ENCODE measurements at regions of chr12 and their contacts with region 1.

Region 1: GRCh38 chr12:54398995-54399793 is 14.7 kb upstream of the ZNF385A start:
- DNase-seq: peak; percentile 93
- ATAC-seq: peak; percentile 97
- H3K4me3 Mint-ChIP-seq: no peak overlapping the region
- H3K27ac Mint-ChIP-seq: no peak overlapping the region
- H3K4me1 Mint-ChIP-seq: peaks cover 5% of the 10 kb centered on the region
- H3K27me3 Mint-ChIP-seq: no peaks in the 10 kb centered on the region
- CTCF ChIP-seq: peak; percentile 92

Region 2: GRCh38 chr12:54337280-54337842 is 61.8 kb before region 1 on chr12:
- CTCF ChIA-PET with region 1: interaction called, 11 read pairs
- POLR2A ChIA-PET with region 1: no interaction called
- intact Hi-C with region 1: no loop called
- DNase-seq: no peak
- ATAC-seq: no peak
- H3K4me3 Mint-ChIP-seq: no peak overlapping the region
- H3K27ac Mint-ChIP-seq: no peak overlapping the region
- H3K4me1 Mint-ChIP-seq: peaks cover 15% of the 10 kb centered on the region
- H3K27me3 Mint-ChIP-seq: no peaks in the 10 kb centered on the region
- CTCF ChIP-seq: no peak

Region 3: GRCh38 chr12:54419088-54419892 is 20.1 kb after region 1 on chr12 and contains the start of gene ITGA5:
- CTCF ChIA-PET with region 1: interaction called, 330 read pairs
- POLR2A ChIA-PET with region 1: interaction called, 10 read pairs
- intact Hi-C with region 1: no loop called
- DNase-seq: peak; percentile 44
- ATAC-seq: peak; percentile 34
- H3K4me3 Mint-ChIP-seq: peak within 1 kb of the TSS; percentile 89
- H3K27ac Mint-ChIP-seq: peak within 1 kb of the TSS; percentile 94
- H3K4me1 Mint-ChIP-seq: peaks cover 58% of the 10 kb centered on the region
- H3K27me3 Mint-ChIP-seq: no peaks in the 10 kb centered on the region
- CTCF ChIP-seq: no peak
- total RNA-seq, gene ITGA5: 35.2 to 36.6 TPM

Region 4: DNA sequence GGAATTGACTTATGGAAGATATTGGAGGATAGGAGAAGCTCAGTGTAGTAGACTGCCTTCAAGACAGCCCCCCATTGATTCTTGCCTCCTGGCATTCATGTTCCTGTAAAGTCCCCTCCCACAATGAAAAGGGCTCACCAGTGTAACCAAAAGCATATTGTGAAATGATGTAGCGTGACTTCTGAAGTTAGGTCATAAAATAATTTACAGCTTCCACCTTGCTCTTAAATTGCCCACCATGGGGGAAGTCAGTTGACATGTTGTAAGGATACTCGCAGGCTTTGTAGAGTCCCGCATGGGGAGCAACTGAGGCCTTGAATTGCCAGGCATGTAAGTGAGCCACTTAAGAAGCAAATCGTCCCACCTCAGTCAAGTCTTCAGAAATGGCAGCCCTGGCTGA is 49.1 kb after region 1 on chr12:
- CTCF ChIA-PET with region 1: interaction called, 479 read pairs
- POLR2A ChIA-PET with region 1: interaction called, 6 read pairs
- intact Hi-C with region 1: no loop called
- DNase-seq: no peak
- ATAC-seq: no peak
- H3K4me3 Mint-ChIP-seq: no peak overlapping the region
- H3K27ac Mint-ChIP-seq: no peak overlapping the region
- H3K4me1 Mint-ChIP-seq: no peaks in the 10 kb centered on the region
- H3K27me3 Mint-ChIP-seq: peaks cover 2% of the 10 kb centered on the region
- CTCF ChIP-seq: no peak

Region 5: DNA sequence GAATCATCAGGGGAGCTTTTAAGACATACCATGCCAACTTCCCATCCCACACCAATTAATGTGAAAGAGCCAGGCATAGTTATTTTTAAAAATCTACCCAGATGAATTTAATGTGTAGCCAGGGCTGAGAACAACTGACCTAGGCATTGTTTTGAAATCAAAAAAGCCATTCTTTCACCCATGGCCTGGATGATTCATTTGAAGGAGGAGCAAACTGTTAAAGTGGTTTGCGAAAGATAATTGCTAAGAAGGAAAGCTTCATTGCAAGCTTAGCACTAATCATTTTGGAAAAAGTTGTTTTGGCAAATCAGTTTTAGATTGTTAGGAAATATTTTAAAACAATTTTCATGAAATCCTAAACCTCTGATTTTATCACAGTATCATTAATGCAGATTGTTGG is 76.3 kb after region 1 on chr12:
- CTCF ChIA-PET with region 1: interaction called, 25 read pairs
- POLR2A ChIA-PET with region 1: interaction called, 7 read pairs
- intact Hi-C with region 1: no loop called
- DNase-seq: no peak
- ATAC-seq: no peak
- H3K4me3 Mint-ChIP-seq: no peak overlapping the region
- H3K27ac Mint-ChIP-seq: no peak overlapping the region
- H3K4me1 Mint-ChIP-seq: no peaks in the 10 kb centered on the region
- H3K27me3 Mint-ChIP-seq: peaks cover 4% of the 10 kb centered on the region
- CTCF ChIP-seq: no peak

Measured in activated CD8-positive, alpha-beta T cell treated with anti-CD3 and anti-CD28 coated beads for 36 hours (primary cell).